AG04450 (cell line): ENCODE measurements at regions of chr12 and their contacts with region 1.

Region 1: GRCh38 chr12:98998697-98999299 is 353.7 kb downstream of the APAF1 start:
- DNase-seq: no peak
- H3K4me3 ChIP-seq: no peak overlapping the region
- H3K27ac ChIP-seq: no peak overlapping the region
- H3K27me3 ChIP-seq: peaks cover 2% of the 10 kb centered on the region
- CTCF ChIP-seq: peak; percentile 72

Region 2: GRCh38 chr12:98418357-98419075 is 580.3 kb before region 1 on chr12:
- CTCF ChIA-PET with region 1: interaction called, 13 read pairs
- POLR2A ChIA-PET with region 1: no interaction called
- DNase-seq: peak; percentile 83
- H3K4me3 ChIP-seq: peak overlapping the region; percentile 50
- H3K27ac ChIP-seq: peak overlapping the region; percentile 80
- H3K27me3 ChIP-seq: no peaks in the 10 kb centered on the region
- CTCF ChIP-seq: no peak

Region 3: DNA sequence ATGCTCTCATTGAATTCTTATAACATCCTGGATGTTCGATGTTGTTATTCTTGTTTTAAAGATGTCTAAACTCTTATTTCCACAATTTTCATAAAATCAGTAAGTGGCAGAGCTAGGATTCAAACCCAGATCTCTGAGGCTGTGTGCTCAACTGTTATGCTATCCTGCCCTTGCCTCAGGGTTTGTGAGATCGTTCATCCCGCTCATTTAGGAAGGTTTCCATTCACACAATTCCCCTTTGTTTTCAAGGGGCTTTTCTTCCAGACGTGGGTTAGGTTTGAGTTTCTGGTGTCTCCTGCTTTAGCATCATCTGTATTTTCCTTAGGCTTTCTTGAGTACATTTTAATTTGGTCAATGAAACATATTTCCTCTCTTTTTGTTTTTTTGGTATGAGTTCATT is 284.4 kb before region 1 on chr12:
- CTCF ChIA-PET with region 1: interaction called, 11 read pairs
- POLR2A ChIA-PET with region 1: no interaction called
- DNase-seq: no peak
- H3K4me3 ChIP-seq: no peak overlapping the region
- H3K27ac ChIP-seq: no peak overlapping the region
- H3K27me3 ChIP-seq: no peaks in the 10 kb centered on the region
- CTCF ChIP-seq: no peak

Region 4: GRCh38 chr12:98725476-98726247 is 273.1 kb before region 1 on chr12:
- CTCF ChIA-PET with region 1: interaction called, 27 read pairs
- POLR2A ChIA-PET with region 1: no interaction called
- DNase-seq: peak; percentile 39
- H3K4me3 ChIP-seq: no peak overlapping the region
- H3K27ac ChIP-seq: peak overlapping the region; percentile 63
- H3K27me3 ChIP-seq: no peaks in the 10 kb centered on the region
- CTCF ChIP-seq: peak; percentile 71

Region 5: GRCh38 chr12:98916106-98916505 is 82.7 kb before region 1 on chr12:
- CTCF ChIA-PET with region 1: no interaction called
- POLR2A ChIA-PET with region 1: no interaction called
- DNase-seq: no peak
- H3K4me3 ChIP-seq: no peak overlapping the region
- H3K27ac ChIP-seq: no peak overlapping the region
- H3K27me3 ChIP-seq: no peaks in the 10 kb centered on the region
- CTCF ChIP-seq: no peak

Region 6: DNA sequence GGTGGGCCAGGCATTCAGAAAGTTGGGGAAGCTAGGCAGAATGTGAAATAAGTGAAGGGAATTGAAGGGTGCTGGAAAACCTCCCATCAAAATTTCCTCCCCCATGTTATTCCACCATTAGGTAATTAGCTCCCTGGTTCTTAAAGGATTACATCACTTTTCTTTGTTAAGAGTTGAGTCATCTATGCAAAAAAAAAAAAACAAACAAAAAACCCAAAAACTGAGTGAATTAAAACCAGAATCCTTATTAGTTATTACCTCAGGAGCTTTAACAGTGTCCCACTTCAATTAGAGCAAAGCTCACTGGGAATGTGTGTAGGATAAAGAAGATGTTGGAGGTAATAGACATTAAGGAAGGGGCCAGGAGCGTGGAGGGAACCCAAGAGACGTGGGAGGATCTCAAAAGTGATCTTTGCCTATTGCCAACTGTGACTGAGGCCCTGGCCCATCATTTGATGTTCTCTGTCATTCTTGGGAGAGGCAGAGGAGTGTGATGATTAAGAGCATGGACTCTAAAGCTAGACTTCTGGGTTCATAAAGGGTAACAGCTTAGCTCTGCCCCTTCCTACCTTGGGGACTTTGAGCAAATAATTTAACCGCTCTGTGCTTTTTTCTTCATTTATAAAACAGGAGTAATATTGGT is 11.0 kb after region 1 on chr12:
- CTCF ChIA-PET with region 1: interaction called, 11 read pairs
- POLR2A ChIA-PET with region 1: no interaction called
- DNase-seq: no peak
- H3K4me3 ChIP-seq: no peak overlapping the region
- H3K27ac ChIP-seq: no peak overlapping the region
- H3K27me3 ChIP-seq: no peaks in the 10 kb centered on the region
- CTCF ChIP-seq: no peak